Right cardiac atrium (tissue), 5 donors: ENCODE measurements at regions of chr22 and their contacts with region 1.

Region 1: DNA sequence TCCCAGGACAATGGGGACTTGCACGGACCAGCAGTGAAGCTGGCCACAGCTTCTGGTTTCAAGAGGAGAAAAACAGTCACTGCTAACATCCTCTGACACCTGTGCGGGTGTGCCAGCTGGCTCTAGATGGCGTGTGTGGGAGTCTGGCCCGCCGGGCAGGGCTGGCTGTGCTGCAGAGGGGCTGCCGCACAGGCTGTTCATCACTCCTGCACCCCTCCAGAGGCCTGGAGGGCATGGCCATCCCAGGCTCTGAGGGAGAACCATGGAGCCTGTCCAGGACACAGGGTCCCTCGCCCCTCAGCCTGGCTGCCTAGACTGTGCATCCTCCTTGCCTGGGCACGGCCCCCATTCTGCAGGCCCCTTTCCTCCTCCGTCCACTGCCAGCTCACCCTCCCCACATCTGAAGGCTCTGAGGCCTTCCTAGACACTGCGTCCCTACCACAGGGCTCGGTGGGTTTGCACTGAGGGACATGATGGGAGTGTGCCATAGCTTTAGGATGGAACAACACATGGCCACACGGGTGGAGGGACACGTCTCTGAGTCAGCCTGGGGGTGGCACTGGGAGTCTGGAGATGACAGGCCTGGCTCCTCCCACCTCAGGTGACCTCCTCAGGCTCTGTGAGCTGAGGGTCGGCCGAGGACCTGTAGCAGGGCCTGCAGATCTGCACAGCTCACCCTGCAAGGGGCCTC is 42.1 kb upstream of the GNB1L start:
- DNase-seq: peak in 1 of 3 donors; percentile 36
- ATAC-seq: no peak
- H3K4me3 ChIP-seq: no peak overlapping the region
- H3K27ac ChIP-seq: no peak overlapping the region
- H3K4me1 ChIP-seq: no peaks in the 10 kb centered on the region
- H3K27me3 ChIP-seq: no peaks in the 10 kb centered on the region

Region 2: DNA sequence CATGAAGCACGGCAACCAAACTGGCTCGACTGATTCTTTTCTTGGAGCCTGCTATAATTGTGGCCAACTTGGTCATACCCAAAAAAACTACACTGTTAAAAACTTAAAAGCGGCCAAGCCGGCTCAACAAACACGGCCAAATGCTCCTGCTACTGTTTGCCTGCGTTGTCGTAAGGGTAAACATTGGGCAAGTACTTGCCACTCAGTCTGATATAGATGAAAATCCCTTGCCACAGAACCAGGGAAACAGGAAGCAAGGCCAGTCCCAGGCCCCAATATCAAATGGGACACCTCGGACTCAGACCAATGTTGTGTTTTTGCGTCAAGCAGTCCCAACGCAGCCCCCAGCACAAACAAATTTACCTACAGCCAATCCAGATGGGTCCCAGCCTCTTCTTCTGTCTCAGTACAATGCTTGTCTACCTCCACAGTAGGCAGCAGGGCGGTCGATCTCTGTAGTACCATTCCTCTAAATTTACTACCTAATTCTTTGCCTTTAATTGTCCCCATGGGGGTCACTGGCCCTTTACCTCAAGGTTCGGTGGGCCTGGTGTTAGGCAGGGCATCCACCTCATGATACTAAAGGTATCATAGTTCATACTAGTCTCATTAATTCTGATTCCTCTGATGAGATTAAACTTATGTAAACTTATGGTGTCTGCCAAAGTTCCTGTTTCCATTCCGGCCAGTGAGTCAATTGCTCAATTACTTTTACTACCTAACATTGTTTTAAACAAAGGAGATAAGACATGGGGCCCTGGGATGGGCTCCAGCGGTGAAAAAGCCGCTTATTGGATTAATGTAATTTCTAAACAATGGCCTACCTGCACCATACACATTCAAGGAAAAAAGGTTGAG is 41.0 kb after region 1 on chr22:
- intact Hi-C with region 1: loop called in 1 of 4 experiments (anchors 5 kb)
- DNase-seq: peak in 1 of 3 donors; percentile 9
- ATAC-seq: no peak
- H3K4me3 ChIP-seq: no peak overlapping the region
- H3K27ac ChIP-seq: no peak overlapping the region
- H3K4me1 ChIP-seq: peaks cover 3% of the 10 kb centered on the region
- H3K27me3 ChIP-seq: no peaks in the 10 kb centered on the region